Ascending aorta (tissue), 2 donors: ENCODE measurements at regions of chr4 and their contacts with region 1.

Region 1: DNA sequence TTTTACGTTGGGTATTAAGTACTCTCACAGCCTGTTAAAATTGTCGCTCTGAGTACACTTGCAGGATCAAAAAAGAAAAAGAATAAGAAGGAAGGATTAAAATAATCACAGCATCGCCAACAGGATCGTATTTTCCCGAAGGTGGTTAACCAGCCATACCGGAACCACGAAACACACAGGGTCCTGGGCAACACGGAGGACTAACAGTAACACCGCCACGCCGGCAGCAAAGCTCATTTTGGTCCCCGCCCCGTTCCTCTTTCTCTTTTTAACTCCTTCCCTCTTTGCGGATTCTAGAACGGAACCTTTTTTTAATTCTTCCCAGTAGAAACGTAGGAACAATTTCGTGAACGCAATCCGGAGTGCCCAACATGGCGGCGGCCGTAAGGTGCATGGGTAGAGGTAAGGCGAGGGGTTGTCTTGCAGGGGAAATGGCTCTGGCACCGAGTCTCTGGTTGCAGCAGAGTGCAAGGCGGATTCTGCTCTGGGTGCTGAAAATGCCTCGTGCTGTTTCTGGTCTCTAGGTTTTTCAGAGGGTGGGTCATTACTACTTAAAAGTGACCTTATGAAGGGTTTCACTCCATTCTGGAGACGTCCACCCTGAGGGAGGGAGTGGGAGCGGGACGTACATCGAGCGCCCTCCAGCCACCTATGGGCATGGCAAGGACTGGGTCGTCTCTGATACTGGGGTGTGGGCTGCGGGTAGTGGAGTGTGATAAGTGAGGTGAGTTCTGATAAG is at the start of gene MRPL1:
- DNase-seq: peak; percentile 58 to 95
- H3K4me3 ChIP-seq: peak within 1 kb of the TSS; percentile 49 to 75
- H3K27ac ChIP-seq: peak within 1 kb of the TSS; percentile 99
- H3K4me1 ChIP-seq: peaks cover 2 to 6% of the 10 kb centered on the region in 2 donors
- H3K27me3 ChIP-seq: no peaks in the 10 kb centered on the region
- CTCF ChIP-seq: no peak
- total RNA-seq, gene MRPL1: 6.2 TPM

Region 2: DNA sequence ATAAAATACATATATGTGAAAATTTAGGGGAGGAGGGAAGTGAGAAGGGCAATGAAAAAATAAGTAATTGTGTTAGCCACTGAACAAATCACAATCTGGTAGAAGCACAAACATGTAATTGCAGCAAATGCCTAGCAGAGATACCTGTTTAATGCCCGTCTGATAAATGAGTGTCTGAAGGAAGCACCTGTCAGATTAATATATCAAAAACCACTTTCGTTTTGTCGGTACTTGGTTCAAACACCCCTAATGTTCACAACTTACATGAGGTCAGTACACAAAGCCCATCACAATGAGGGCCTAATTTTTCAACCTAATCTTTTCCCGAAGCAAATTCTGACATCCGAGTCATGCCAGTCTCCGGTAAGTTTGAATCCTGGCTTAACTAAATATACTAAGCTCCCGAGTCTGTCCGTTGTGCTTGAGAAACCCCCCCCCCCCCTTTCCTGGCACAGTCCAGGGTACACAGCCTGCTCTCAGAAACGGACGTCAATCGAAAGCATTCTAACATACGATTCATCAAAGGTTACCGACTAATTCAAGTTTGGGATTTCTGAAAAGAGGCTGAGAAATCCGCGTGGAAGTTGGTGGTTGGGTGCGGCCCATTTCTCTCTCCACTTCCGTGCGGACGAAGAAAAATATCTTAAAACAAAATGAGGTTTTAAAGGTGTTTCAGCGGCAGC is 1872.7 kb before region 1 on chr4:
- intact Hi-C with region 1: loop called (anchors 2 kb)
- DNase-seq: no peak
- H3K4me3 ChIP-seq: peak overlapping the region; percentile 67 to 80
- H3K27ac ChIP-seq: peak overlapping the region; percentile 65 to 68
- H3K4me1 ChIP-seq: peaks cover 0 to 5% of the 10 kb centered on the region in 2 donors
- H3K27me3 ChIP-seq: no peaks in the 10 kb centered on the region
- CTCF ChIP-seq: no peak

Region 3: DNA sequence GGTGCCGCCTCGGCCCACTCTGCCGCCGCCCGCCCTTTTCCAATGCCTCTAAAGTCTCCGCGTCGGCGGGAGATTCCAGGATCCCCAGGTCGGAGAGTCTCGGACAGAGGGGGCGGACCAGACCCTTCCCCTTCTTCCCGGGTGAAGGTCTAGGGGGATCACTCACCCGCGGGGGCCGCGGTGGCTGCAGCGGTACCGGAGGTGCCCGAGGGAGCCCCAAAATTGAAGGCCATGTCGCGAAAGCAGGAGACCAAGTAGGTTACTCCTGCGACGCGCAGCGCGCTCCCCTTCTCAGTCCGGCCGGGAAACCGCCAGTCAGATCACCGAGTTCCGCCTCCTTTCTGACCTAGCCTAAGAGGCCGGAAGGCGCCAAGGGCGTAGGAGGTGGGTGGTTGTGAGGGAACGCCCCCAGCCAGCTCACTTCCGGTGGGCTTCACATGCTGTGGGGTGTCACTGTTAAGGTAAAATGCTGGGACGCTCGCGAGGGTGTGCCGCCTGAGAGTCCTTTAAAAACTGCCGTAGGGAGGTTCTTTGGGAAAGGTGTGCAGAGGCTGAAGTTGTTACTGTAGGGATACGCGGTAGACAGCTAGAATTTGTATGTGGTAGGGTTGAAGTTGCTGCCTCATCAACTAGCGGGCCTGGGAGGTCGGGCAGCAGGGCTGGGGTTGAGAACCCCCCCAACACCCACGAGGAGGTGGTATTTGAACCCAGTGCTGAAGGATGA is 1714.3 kb before region 1 on chr4 and contains the start of gene NUP54:
- intact Hi-C with region 1: loop called (anchors 5 kb)
- DNase-seq: peak; percentile 81 to 98
- H3K4me3 ChIP-seq: peak within 1 kb of the TSS; percentile 85 to 95
- H3K27ac ChIP-seq: peak within 1 kb of the TSS; percentile 87 to 88
- H3K4me1 ChIP-seq: peaks cover 0 to 24% of the 10 kb centered on the region in 2 donors
- H3K27me3 ChIP-seq: no peaks in the 10 kb centered on the region
- CTCF ChIP-seq: no peak
- total RNA-seq, gene NUP54: 20.2 TPM

Region 4: DNA sequence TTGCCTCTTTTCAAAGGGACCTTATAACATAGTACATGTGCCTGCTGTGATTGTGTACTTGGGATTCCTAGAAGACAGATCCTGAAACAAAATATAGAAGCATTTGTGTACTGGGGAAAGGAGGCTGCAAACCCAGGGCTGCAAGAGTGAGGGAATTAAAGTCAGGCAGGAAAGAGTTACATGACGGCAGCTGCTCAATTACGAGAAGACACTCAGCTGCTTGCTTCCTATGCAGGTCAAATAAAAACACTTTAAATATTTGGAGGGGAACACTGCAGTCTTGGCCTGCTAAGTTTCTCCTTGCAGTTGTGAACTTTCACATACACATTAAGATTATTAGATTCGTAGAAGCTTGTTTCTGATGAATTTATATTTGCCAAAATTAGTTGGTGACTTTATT is 448.9 kb before region 1 on chr4:
- intact Hi-C with region 1: no loop called
- DNase-seq: no peak
- H3K4me3 ChIP-seq: no peak overlapping the region
- H3K27ac ChIP-seq: no peak overlapping the region
- H3K4me1 ChIP-seq: no peaks in the 10 kb centered on the region
- H3K27me3 ChIP-seq: no peaks in the 10 kb centered on the region
- CTCF ChIP-seq: no peak

Region 5: DNA sequence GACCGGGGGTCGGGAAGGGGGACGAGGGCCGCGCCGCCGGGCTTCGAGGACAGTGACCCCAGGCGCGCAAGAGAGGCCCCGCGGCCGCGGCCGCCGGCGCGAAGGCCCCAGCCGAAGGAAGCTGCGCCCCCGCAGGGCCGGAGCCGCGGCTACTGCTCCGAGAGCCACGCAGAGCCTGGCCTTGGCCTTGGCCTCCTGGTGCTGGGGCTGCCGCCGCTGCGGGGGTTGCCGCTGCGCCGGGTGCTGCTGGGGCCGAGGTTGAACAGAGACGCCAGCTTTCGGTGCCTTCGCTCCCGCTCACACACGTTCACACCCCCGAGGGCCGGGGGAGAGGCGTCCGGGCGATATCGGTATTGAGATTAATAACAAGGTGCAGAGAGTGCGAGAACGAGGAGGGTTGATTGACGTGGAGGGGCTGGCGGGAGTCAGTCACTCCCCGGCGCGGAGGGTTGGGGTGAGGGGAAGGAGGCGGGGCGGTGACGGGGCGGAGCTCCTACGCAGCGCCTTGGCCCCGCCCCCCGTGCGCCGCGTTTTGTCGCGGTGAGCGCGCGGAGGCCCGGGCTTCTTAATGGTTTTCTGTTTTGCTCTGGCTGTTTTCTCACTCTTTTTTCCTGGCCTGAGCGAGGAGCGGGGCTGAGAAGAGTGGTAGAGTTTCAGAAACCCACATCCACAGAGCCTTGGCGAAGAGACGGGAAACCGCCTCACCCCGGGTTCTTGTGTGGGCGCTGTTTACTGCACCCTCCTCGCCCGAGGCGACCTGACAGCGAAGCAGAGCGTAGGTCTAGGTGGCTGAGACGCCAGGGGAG is 42.6 kb before region 1 on chr4:
- intact Hi-C with region 1: loop called (anchors 1 kb)
- DNase-seq: peak; percentile 64 to 94
- H3K4me3 ChIP-seq: peak overlapping the region; percentile 97 to 99
- H3K27ac ChIP-seq: peak overlapping the region; percentile 98 to 100
- H3K4me1 ChIP-seq: peaks cover 0 to 24% of the 10 kb centered on the region in 2 donors
- H3K27me3 ChIP-seq: no peaks in the 10 kb centered on the region
- CTCF ChIP-seq: no peak

Region 6: GRCh38 chr4:78661921-78662521 is 799.4 kb after region 1 on chr4:
- intact Hi-C with region 1: no loop called
- DNase-seq: no peak
- H3K4me3 ChIP-seq: no peak overlapping the region
- H3K27ac ChIP-seq: no peak overlapping the region
- H3K4me1 ChIP-seq: peaks cover 0 to 3% of the 10 kb centered on the region in 2 donors
- H3K27me3 ChIP-seq: no peaks in the 10 kb centered on the region
- CTCF ChIP-seq: no peak

Region 7: DNA sequence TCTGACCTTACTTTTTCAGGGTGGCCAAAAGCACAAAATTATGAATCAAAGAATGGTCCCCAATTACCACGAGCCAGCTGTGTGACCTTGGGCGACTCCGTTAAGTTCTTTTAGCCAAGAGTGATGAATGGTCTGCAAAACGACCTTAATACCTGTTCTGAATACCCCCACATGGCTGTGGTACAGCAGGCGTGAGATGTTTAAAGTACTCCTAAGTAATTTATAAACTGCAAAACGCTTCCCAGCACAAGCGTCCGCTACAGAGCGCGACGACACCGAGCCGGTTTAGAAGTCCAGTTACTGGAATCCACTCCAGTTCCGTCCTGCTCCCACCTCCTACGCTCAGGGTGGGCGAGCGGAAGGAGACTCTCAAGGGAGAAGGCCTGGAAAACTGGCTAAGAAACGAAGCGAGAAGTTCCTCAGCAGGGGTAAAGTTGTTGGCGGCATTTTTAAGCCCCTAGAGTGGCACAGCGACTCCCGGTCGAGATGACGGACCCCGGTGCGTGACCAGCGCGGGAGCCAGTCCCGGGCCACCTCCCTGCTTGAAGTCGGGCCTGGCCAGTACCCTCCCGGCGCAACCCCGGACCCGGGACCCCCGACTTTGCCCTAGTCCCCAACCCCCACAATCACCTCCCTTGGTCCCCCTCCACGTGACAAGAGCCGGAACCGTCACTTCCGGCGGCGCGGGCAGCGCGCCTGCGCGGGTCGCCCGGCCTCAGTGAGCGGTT is 912.8 kb after region 1 on chr4:
- intact Hi-C with region 1: loop called (anchors 2 kb)
- DNase-seq: peak; percentile 60 to 95
- H3K4me3 ChIP-seq: peak overlapping the region; percentile 73 to 97
- H3K27ac ChIP-seq: peak overlapping the region; percentile 93 to 99
- H3K4me1 ChIP-seq: peaks cover 4 to 5% of the 10 kb centered on the region in 2 donors
- H3K27me3 ChIP-seq: no peaks in the 10 kb centered on the region
- CTCF ChIP-seq: no peak